A673 (cell line): ENCODE measurements at regions of chr1 and their contacts with region 1.

Region 1: DNA sequence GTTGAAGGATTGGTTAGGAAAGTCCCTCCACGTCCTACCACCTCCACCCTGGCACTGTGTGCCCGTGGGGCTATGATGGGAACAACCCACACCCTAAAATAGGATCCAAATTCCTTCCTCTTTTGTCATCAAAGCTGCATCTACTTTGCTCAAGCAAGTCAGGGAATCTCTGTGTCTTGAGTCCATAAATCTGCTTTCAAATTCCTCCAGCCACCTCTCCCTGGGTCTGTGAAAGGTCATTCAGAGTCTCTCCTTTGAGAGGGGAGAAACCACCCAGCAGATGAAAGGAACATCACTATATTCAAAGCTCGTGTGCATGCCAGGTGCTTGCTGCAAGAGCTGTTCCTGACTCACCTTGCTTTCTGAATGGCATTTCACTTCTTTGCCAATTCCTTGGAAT is 243.6 kb downstream of the TM2D1 start:
- DNase-seq: no peak
- H3K4me3 ChIP-seq: no peak overlapping the region
- H3K27ac ChIP-seq: no peak overlapping the region
- H3K4me1 ChIP-seq: no peaks in the 10 kb centered on the region
- H3K27me3 ChIP-seq: peaks cover 9% of the 10 kb centered on the region
- CTCF ChIP-seq: no peak

Region 2: GRCh38 chr1:60564916-60565750 is 916.2 kb before region 1 on chr1:
- CTCF ChIA-PET with region 1: no interaction called
- POLR2A ChIA-PET with region 1: no interaction called
- intact Hi-C with region 1: no loop called
- DNase-seq: no peak
- H3K4me3 ChIP-seq: no peak overlapping the region
- H3K27ac ChIP-seq: no peak overlapping the region
- H3K4me1 ChIP-seq: no peaks in the 10 kb centered on the region
- H3K27me3 ChIP-seq: peaks cover 68% of the 10 kb centered on the region
- CTCF ChIP-seq: no peak

Region 3: DNA sequence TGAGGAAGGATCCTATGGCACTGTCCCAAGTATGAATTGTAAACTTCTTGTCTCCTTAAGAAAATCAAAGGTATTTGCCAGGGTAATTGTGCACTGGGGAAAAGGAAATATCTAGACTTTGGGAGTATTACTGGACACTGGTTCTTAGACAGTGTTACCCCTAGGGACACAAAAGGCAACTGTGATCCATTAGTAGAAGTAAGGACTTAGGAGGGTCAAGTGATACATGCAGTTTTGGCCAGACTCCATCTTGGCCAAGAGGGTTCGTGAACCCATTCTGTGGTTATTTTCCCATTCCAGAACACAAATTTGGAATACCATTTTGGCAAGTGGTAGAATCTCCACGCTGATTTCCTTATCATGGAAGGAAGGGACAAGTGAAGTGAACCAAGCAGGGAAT is 145.5 kb after region 1 on chr1:
- CTCF ChIA-PET with region 1: no interaction called
- POLR2A ChIA-PET with region 1: interaction called, 10 read pairs
- intact Hi-C with region 1: no loop called
- DNase-seq: no peak
- H3K4me3 ChIP-seq: no peak overlapping the region
- H3K27ac ChIP-seq: no peak overlapping the region
- H3K4me1 ChIP-seq: no peaks in the 10 kb centered on the region
- H3K27me3 ChIP-seq: no peaks in the 10 kb centered on the region
- CTCF ChIP-seq: no peak